GM18951 (cell line): ENCODE measurements at regions of chr12 and their contacts with region 1.

Region 1: DNA sequence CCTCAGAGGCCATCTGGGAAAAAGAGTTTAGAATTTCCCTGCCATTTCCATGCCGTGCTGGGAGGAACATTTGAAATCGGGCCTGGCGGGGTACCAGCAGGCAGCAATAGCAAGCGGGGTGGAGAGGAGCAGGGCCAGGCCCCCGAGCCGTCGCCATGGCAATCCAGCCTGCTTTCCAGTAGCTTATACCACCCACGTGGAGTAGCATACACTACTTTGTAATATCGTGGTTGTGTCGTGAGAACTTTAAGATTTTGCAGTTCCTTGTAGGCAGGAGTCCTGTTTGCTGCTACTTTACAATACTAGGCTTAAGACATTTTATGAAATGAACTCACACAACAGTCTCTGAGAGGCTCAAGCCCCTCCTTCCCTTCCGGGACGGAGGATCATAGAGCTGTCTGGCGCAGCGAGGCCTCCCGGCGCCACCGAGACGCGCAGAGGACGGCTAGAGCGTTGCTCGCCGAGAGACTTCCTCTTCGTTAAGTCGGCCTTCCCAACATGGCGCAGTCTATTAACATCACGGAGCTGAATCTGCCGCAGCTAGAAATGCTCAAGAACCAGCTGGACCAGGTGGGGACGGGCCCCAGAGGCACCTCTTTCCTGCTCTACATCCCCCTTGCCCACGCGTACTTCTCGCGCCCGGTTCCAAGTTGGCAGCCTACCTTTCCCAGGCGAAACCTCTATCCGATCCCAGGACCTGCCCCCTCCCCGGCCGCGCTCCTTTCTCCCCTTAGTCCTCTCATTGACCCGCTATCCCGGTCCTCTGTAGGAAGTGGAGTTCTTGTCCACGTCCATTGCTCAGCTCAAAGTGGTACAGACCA is at the start of gene PFDN5:
- POLR2A ChIP-seq: peak; percentile 83

Region 2: DNA sequence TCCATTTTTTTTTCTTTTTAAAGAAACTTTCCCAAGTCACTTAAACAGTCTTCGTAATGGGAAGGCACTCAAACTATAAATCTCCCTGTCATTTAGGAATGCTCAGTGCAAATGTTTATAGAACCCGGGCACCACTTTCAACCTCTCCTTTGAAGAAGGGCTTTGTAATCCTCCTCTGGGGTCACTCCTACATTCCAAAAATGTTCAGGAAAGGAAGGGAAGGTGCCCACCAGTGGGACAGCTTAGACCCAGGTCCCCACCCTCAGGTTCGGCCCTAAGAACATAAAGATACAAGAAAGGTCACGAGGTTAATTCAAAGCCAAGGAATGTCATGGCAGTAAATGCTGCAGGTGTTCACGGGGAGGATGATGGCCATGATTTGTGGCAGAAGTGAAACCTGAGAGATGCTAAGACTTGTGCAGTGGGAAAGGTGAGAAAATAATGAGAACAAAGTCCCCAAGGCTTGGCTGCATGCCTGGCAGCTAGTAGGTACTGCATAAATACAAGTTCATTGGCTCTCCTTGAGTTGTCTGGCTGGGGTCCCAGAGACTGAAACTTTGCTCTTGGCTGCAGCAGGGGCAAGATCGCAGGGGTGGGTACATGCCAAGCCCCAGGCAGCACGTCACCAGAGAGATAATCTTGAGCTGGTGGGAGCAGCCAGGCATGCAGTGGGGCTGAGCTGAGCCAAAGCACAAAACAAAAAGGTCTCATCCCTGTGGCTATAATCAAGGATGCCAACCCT is 325.3 kb before region 1 on chr12:
- in situ Hi-C with region 1: no loop called
- POLR2A ChIP-seq: no peak

Region 3: GRCh38 chr12:53213348-53213747 is 81.9 kb before region 1 on chr12:
- in situ Hi-C with region 1: loop called (anchors 10 kb)
- POLR2A ChIP-seq: no peak